ENCODE measurements at regions of chr3 and their contacts with region 1.

Region 1: DNA sequence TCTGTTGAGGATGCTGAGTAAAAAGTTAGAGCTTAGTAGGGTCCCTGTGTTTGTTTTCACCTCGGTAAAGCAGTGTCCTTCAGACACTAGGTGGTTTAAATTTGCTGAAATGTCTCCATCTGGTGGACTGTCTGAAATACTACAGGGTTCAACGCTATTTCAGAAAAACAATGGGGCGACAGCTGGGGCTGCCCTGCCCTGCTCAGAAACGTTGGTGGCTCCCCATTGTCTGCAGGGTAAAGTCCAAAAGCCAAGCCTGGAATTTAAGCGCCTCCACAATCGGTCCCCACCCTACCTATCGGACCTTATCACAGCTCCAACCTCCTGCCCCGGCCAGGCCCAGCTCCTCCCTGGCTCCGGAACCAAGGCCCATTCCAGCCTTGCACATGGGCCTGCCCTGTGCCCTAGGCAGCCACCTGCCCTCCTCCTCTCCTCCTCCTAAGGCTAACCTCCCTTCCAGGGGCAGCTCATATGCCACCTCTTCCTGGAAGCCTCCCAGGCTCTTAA is 4.3 kb upstream of the TSEN2 start:
- DNase-seq: no peak
- H3K4me3 ChIP-seq: no peak overlapping the region
- H3K27ac ChIP-seq: no peak overlapping the region
- H3K4me1 ChIP-seq: peaks cover 16% of the 10 kb centered on the region
- H3K27me3 ChIP-seq: no peaks in the 10 kb centered on the region
- CTCF ChIP-seq: peak; percentile 69 to 83 (median 71)
- POLR2A ChIP-seq: no peak

Region 2: DNA sequence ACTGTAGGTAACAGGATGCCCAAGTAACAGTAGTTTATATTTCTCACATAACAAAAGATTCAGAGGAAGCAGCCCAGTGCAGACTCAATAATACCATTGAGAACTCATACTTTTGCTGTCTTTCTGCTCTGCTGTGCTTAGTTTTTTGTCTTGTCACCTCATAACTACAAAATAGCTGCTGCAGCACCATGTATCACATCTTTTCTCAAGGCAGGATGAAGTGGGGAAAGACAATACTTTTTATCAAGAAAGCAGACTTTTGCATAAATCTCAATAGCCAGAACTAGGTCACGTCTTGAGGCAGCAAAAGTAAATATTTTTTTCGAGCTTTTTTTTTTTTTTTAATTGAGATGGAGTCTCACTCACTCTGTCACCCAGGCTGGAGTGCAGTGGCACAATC is 515.4 kb before region 1 on chr3:
- intact Hi-C with region 1: no loop called
- DNase-seq: no peak
- H3K4me3 ChIP-seq: no peak overlapping the region
- H3K27ac ChIP-seq: no peak overlapping the region
- H3K4me1 ChIP-seq: no peaks in the 10 kb centered on the region
- H3K27me3 ChIP-seq: no peaks in the 10 kb centered on the region
- CTCF ChIP-seq: no peak
- POLR2A ChIP-seq: no peak

Region 3: DNA sequence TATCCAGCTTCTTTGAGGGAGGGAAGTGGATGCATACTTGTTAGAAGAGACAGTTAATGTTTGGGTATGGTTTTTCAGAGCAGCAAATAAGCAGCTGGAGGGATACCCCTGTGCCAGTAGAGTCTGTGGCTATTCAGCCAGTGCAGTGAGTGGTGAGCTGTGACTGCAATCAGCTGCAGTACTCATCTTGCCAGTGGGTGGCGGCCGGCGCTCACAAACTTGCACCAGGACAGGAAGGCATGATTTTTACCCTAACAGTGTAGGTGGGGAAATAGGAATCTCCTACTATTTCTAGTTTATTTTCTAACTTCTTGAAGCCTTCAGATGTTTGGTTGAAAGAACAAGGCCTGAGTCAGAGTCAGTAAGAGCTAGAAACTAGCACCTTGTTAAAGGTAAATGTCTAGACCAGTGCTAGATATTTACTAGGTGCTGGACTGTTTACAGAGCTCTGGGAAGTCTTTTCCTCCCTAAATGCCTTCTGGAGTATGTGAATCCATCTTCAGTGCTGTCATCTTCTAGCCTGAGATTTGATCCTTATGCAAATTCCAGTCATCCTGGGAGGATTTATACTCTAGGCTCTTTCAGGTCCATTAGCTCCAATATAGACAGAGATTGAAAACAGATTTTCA is 344.8 kb before region 1 on chr3:
- intact Hi-C with region 1: loop called (anchors 5 kb)
- DNase-seq: peak; percentile 89
- H3K4me3 ChIP-seq: no peak overlapping the region
- H3K27ac ChIP-seq: no peak overlapping the region
- H3K4me1 ChIP-seq: peaks cover 4% of the 10 kb centered on the region
- H3K27me3 ChIP-seq: no peaks in the 10 kb centered on the region
- CTCF ChIP-seq: peak; percentile 76 to 82 (median 78)
- POLR2A ChIP-seq: no peak

Measured in testis (tissue), 5 donors.